Activated CD8-positive, alpha-beta T cell treated with anti-CD3 and anti-CD28 coated beads for 36 hours (primary cell): ENCODE measurements at regions of chr3 and their contacts with region 1.

Region 1: GRCh38 chr3:138923531-138923994 is 23.4 kb downstream of the FOXL2 start:
- DNase-seq: peak; percentile 93
- ATAC-seq: peak; percentile 93
- H3K4me3 Mint-ChIP-seq: no peak overlapping the region
- H3K27ac Mint-ChIP-seq: no peak overlapping the region
- H3K4me1 Mint-ChIP-seq: no peaks in the 10 kb centered on the region
- H3K27me3 Mint-ChIP-seq: peaks cover 4% of the 10 kb centered on the region
- CTCF ChIP-seq: peak; percentile 79

Region 2: DNA sequence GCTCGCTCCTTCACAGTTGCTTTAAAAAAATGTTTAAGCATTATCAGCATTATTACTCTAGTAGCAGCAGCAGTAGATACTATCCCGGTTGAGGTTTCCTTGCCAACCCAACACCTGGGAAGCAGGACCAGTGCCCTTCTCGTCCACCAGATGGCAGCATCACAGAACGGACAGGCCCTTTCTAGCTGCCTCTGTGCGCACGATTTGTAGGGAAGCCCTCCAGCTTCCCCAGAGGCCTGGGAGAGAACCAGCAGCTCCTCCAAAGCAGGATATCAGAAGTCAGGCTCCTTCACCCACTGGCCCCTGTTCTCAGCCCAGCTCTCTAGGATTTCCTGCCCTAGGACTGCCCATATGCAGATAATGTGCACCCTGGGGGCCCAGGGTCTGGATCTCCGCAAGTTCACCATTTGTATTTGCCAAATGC is 506.0 kb before region 1 on chr3:
- CTCF ChIA-PET with region 1: interaction called, 39 read pairs
- POLR2A ChIA-PET with region 1: no interaction called
- intact Hi-C with region 1: loop called (anchors 5 kb)
- DNase-seq: peak; percentile 77
- ATAC-seq: peak; percentile 87
- H3K4me3 Mint-ChIP-seq: no peak overlapping the region
- H3K27ac Mint-ChIP-seq: no peak overlapping the region
- H3K4me1 Mint-ChIP-seq: peaks cover 4% of the 10 kb centered on the region
- H3K27me3 Mint-ChIP-seq: peaks cover 5% of the 10 kb centered on the region
- CTCF ChIP-seq: peak; percentile 80

Region 3: GRCh38 chr3:138694287-138695007 is 229.1 kb before region 1 on chr3:
- CTCF ChIA-PET with region 1: interaction called, 347 read pairs
- POLR2A ChIA-PET with region 1: no interaction called
- intact Hi-C with region 1: no loop called
- DNase-seq: no peak
- ATAC-seq: no peak
- H3K4me3 Mint-ChIP-seq: no peak overlapping the region
- H3K27ac Mint-ChIP-seq: no peak overlapping the region
- H3K4me1 Mint-ChIP-seq: no peaks in the 10 kb centered on the region
- H3K27me3 Mint-ChIP-seq: no peaks in the 10 kb centered on the region
- CTCF ChIP-seq: no peak

Region 4: GRCh38 chr3:138774529-138775253 is 148.9 kb before region 1 on chr3:
- CTCF ChIA-PET with region 1: no interaction called
- POLR2A ChIA-PET with region 1: no interaction called
- intact Hi-C with region 1: no loop called
- DNase-seq: peak; percentile 53
- ATAC-seq: peak; percentile 88
- H3K4me3 Mint-ChIP-seq: no peak overlapping the region
- H3K27ac Mint-ChIP-seq: no peak overlapping the region
- H3K4me1 Mint-ChIP-seq: peaks cover 28% of the 10 kb centered on the region
- H3K27me3 Mint-ChIP-seq: no peaks in the 10 kb centered on the region
- CTCF ChIP-seq: no peak

Region 5: DNA sequence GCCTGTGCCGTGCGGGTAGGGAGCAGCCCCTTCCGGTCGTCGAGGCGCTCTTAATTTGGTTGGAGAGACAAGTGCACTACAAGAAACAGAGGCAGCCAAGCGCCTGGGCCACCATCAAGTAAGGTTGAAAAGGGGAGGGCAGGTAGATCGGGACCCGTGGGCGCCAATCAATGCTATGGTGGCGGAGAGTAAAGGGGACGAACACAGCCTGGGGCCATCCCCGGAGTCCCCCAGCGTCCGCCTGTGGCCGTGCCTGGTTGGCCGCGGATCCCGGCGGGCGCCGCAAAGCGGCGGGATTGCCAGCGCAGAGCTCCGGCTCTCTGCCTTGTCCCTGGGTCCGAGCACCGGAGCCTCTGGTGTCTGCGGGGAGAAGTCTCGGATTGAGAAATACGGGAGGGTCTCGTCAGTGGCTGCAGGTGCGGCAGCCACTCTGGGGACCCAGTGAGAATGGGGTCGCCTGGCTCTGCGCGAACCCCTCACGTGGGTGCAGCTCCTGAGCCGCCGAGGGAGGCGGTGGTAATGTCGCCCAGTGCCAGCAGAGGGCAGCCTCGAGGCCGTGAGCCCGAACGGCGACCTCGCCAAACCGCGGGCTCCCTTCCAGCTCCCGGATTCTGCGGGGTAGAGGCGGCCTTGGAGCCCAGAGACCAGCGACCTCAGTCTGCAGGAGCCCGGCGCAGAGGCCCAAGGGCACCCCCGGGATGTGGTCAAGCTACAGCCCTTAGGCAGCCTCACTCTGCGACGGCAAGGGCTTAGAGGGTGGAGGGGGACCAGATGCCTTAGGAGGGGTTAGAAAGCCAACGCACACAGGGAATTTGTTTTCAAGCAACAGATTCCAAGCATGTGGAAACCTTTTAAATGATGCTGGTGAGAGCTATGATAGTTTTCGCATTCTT is 12.5 kb after region 1 on chr3:
- CTCF ChIA-PET with region 1: interaction called, 118 read pairs
- POLR2A ChIA-PET with region 1: interaction called, 7 read pairs
- intact Hi-C with region 1: no loop called
- DNase-seq: peak; percentile 79
- ATAC-seq: peak; percentile 87
- H3K4me3 Mint-ChIP-seq: peak overlapping the region; percentile 67
- H3K27ac Mint-ChIP-seq: no peak overlapping the region
- H3K4me1 Mint-ChIP-seq: peaks cover 31% of the 10 kb centered on the region
- H3K27me3 Mint-ChIP-seq: peaks cover 71% of the 10 kb centered on the region
- CTCF ChIP-seq: peak; percentile 92

Region 6: DNA sequence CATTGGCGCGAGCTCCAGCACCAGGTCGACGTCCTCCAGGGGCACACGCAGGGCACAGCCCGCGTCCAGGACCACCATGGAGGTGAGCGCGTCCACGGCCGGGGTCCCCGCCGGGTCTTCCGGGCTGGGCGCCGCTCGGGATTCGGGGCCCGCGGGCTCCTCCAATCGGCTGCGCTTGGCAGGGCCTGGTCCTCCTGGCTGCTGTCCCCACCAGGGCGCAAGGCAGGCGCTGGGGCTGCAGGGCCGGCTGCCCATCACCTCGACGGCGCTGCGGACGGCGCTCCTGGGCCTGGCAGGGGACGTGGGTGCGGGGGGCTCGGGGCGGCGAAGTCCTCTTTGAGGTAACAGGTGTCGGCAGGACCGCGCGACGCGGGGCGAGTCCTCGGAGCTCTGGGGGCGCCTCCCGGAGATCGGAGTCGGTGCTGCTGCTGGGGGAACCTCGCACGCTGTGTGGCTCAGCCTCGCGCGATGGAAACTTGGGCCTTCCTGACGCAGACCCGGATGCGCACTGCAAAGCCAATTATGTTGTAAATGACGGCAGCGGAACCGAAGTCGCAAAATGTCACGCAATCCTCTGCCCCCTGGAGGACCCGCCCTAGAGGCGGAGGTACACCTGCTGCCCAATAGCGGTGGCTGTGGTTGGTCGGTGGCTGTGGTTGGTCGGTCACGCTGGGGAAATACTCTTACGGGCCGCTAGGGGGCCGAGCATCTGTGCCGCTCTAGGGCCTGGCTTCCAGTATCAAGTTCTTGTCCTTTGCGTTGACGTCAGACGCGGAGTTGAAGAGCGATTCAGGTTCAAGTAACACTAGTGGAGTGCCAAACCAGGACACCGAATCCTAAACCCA is 121.0 kb after region 1 on chr3 and contains the start of gene PRR23C:
- CTCF ChIA-PET with region 1: no interaction called
- POLR2A ChIA-PET with region 1: no interaction called
- intact Hi-C with region 1: no loop called
- DNase-seq: no peak
- ATAC-seq: no peak
- H3K4me3 Mint-ChIP-seq: no peak within 1 kb of the TSS
- H3K27ac Mint-ChIP-seq: no peak within 1 kb of the TSS
- H3K4me1 Mint-ChIP-seq: no peaks in the 10 kb centered on the region
- H3K27me3 Mint-ChIP-seq: peaks cover 4% of the 10 kb centered on the region
- CTCF ChIP-seq: no peak
- total RNA-seq, gene PRR23C: not detected

Region 7: DNA sequence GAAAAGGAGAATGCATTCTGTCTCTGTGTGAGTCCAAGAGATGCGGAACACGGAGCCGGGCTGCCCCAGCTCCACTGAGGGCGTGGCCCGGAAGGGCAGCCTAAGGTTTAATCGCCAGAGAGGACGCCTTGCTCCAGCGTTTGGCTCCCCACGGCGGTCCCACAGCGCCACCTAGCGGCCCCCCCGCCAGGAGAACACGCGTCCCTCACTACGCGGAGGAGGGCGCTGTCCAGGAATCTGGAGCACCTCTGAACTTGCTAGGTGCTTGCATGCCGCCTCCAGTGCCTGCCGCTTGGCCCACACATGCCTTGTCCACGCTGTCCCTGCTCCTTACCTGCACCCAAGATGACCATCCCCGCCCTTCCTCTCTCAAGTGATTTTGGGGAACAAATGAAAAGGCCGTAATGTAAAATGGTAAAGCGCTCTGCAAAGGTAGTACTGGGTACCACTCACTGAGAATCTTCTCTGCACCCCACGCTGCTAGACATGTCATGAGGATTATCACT is 405.8 kb after region 1 on chr3:
- CTCF ChIA-PET with region 1: interaction called, 16 read pairs
- POLR2A ChIA-PET with region 1: no interaction called
- intact Hi-C with region 1: no loop called
- DNase-seq: peak; percentile 92
- ATAC-seq: peak; percentile 97
- H3K4me3 Mint-ChIP-seq: peak overlapping the region; percentile 46
- H3K27ac Mint-ChIP-seq: no peak overlapping the region
- H3K4me1 Mint-ChIP-seq: peaks cover 9% of the 10 kb centered on the region
- H3K27me3 Mint-ChIP-seq: peaks cover 26% of the 10 kb centered on the region
- CTCF ChIP-seq: peak; percentile 94